CD8-positive, alpha-beta memory T cell (primary cell): ENCODE measurements at regions of chr7 and their contacts with region 1.

Region 1: GRCh38 chr7:3673524-3673923 is 372.5 kb downstream of the SDK1 start:
- DNase-seq: peak; percentile 5 to 51 (median 28)
- H3K4me3 ChIP-seq: no peak overlapping the region
- H3K4me3 Mint-ChIP-seq: no peak overlapping the region
- H3K27ac ChIP-seq: no peak overlapping the region
- H3K27ac Mint-ChIP-seq: no peak overlapping the region
- H3K4me1 ChIP-seq: peaks cover 13% of the 10 kb centered on the region
- H3K4me1 Mint-ChIP-seq: no peaks in the 10 kb centered on the region
- H3K27me3 ChIP-seq: no peaks in the 10 kb centered on the region
- H3K27me3 Mint-ChIP-seq: peaks cover 4 to 16% of the 10 kb centered on the region in 2 donors

Region 2: DNA sequence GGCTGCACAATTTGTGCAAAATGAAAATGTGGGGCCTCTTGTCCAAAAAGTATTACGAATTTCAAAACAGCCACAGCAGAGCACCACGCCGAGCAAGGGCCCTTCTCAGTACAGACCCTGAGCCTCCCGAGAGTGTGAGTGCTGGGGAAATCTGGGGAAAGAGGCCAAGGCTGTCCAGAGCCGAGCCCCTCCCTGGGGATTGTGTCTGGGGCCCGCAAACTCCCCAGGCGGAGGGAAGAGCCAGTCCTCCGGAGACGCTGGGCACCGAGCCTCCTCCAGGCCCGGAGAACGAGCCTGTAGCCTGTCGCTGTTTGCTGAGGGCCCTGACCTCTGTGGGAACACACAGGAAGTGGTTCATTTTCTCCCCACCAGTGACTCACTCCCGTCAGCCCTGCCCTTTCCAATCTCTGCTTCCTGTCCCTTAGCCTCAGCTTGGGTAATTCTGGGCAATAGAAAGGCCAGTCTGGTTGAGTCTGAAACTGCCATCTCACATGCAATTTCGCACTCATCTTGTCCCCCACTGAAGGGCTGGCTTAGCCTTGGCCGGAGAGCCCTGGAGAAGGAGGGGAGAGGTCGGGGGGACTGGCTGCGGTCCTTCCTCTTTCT is 810.0 kb before region 1 on chr7:
- CTCF ChIA-PET with region 1: interaction called, 14 read pairs
- POLR2A ChIA-PET with region 1: no interaction called
- DNase-seq: peak; percentile 24 to 82 (median 61)
- H3K4me3 ChIP-seq: peak overlapping the region; percentile 32
- H3K4me3 Mint-ChIP-seq: peak overlapping the region; percentile 37 to 89 (median 67)
- H3K27ac ChIP-seq: peak overlapping the region; percentile 43
- H3K27ac Mint-ChIP-seq: peak overlapping the region; percentile 59 to 97 (median 89)
- H3K4me1 ChIP-seq: peaks cover 23% of the 10 kb centered on the region
- H3K4me1 Mint-ChIP-seq: peaks cover 26 to 28% (median 27%) of the 10 kb centered on the region in 3 donors
- H3K27me3 ChIP-seq: no peaks in the 10 kb centered on the region
- H3K27me3 Mint-ChIP-seq: peaks cover 0 to 2% of the 10 kb centered on the region in 2 donors